Activated CD8-positive, alpha-beta T cell treated with anti-CD3 and anti-CD28 coated beads, Interleukin-2, amount 10 ng/mL, durations not matched to agents 7 days and 5 days (primary cell): ENCODE measurements at regions of chr17 and their contacts with region 1.

Region 1: DNA sequence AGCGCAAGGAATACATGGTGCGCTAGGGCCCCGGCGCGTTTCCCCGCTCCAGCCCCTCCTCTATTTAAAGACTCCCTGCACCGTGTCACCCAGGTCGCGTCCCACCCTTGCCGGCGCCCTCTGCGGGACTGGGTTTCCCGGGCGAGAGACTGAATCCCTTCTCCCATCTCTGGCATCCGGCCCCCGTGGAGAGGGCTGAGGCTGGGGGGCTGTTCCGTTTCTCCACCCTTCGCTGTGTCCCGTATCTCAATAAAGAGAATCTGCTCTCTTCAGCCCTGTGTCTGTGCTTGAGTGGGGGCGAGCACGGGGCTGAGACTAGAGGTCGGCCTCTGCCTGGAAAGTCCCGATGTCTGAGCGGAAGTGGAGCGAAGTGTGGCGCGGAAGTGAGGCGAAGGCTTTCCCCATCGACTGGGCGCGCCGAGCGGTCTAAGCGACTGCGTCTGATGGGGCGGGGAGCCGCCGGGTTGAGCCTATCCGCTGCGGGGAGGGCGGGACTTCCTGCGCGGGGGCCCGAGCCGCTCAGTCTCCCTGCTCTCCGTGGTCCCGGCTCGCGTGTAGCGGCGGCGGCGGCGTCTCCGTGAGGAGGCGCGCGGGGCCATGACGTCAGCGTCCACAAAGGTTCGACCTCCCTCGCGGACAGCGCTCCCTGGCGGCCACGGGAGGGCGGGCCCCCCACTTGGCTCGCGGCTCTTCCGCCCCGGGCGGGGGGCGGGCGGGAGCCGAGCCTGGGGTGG is 2.0 kb downstream of the RNASEK start:
- DNase-seq: peak; percentile 98
- ATAC-seq: peak; percentile 89
- H3K4me3 Mint-ChIP-seq: peak overlapping the region; percentile 87
- H3K27ac Mint-ChIP-seq: peak overlapping the region; percentile 99
- H3K4me1 Mint-ChIP-seq: peaks cover 74% of the 10 kb centered on the region
- H3K27me3 Mint-ChIP-seq: no peaks in the 10 kb centered on the region

Region 2: DNA sequence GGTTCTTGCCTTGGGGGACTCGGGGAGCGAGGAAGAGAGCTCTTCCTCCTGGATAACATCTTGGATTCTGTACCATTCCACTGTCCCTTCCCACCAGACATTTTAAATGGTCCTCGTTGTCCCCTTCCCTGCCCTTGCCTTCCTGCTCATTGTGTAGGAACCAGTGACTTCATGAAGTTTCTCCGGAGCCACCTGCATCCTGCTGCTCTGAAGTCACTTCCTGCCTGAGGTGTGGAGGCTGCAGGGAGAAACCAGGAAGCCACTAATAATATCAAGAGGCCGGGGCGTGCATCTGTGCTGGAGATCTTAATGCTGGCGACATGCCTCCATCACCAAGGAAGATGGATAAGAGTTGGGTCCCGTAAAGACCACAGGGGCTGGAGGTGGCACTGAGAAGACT is 15.2 kb after region 1 on chr17:
- CTCF ChIA-PET with region 1: interaction called, 4 read pairs
- POLR2A ChIA-PET with region 1: interaction called, 16 read pairs
- DNase-seq: peak; percentile 70
- ATAC-seq: peak; percentile 70
- H3K4me3 Mint-ChIP-seq: peak overlapping the region; percentile 50
- H3K27ac Mint-ChIP-seq: peak overlapping the region; percentile 89
- H3K4me1 Mint-ChIP-seq: peaks cover 62% of the 10 kb centered on the region
- H3K27me3 Mint-ChIP-seq: no peaks in the 10 kb centered on the region

Region 3: GRCh38 chr17:7156342-7156940 is 142.0 kb after region 1 on chr17:
- CTCF ChIA-PET with region 1: no interaction called
- POLR2A ChIA-PET with region 1: no interaction called
- DNase-seq: no peak
- ATAC-seq: no peak
- H3K4me3 Mint-ChIP-seq: no peak overlapping the region
- H3K27ac Mint-ChIP-seq: no peak overlapping the region
- H3K4me1 Mint-ChIP-seq: no peaks in the 10 kb centered on the region
- H3K27me3 Mint-ChIP-seq: peaks cover 20% of the 10 kb centered on the region